Heart left ventricle (tissue), 16 donors: ENCODE measurements at regions of chr10 and their contacts with region 1.

Region 1: DNA sequence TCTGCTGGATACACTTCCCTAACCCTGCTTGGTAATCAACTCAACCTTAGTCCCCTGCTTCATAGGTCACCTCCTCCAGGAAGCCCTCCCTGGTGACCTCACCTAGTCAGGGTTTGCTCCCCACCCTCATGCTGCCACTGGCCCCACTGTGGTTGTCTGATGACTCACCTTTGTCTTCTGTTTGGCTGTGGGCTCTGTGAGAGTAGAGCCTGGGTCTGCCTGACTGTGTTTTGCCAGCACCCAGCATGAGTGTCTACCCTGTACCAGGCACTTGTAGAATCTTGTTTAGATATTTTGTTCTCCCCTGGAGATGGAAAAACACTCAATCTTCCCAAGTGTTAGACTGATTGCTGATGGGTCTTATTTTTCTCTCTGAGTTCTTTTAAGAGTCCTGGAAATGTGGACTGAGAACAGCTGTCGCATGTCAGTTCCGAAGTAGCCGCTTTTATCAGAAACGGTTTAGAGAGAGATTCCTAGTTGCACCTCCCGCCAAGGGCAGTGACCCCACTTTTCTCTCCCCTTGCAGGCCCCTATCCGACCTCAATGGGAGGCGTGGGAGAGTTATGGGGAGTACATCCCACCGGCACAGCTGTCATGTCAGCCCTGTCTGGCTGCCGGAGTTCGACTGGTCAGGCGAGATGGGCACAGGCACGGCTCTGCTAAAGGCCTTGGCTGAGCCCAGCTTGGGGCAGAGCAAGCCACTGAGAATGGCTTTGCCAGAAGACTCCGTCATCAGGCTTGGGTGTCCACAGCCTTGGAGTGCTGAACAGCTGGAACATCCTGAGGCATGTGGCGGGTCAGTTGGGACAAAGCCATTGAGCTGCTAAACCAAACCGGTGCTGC is 134.3 kb downstream of the GRK5 start:
- DNase-seq: peak; percentile 77 to 92 (median 83)
- ATAC-seq: peak; percentile 80 to 85 (median 82)
- H3K4me3 ChIP-seq: no peak overlapping the region
- H3K27ac ChIP-seq: peak overlapping the region; percentile 54 to 87 (median 78)
- H3K4me1 ChIP-seq: peaks cover 3 to 76% (median 42%) of the 10 kb centered on the region in 12 donors
- H3K27me3 ChIP-seq: no peaks in the 10 kb centered on the region
- CTCF ChIP-seq: no peak
- POLR2A ChIP-seq: no peak

Region 2: DNA sequence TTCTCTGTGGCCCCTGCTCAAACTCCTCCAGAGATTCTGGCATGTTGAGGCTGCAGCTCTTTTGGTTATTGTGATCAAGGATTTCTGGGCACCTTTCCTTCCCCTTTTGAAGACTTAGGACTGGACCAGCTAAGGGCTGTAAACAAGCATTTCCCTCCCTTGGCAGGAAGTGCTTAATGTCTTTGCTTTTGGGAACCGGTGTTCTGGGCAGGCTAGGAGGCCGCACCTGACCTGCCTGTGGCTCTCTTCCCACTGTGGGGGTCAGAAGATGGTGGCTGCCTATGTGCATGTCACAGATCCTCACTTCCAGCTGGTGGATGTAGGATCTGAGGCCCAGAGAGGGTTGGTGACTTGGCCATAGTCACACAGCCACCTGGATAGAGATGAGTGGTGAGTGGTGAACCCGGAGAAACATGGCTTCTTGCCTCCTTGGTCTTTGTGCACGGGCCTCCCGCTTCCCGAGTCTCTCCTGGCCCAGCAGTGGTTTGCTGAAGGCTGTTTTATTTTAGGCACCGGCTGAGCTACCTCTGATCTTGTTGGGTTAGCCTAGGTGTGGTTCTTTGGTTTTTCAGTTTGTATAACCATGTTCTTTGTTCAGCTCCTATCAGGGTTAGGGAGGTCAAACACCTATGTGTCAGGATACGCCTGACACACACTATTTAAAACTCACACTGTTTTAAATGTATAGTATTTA is 52.3 kb before region 1 on chr10:
- intact Hi-C with region 1: loop called in 1 of 10 experiments (anchors 5 kb)
- DNase-seq: peak in 2 of 5 donors; percentile 30 to 54
- ATAC-seq: peak in 1 of 4 donors; percentile 38
- H3K4me3 ChIP-seq: no peak overlapping the region
- H3K27ac ChIP-seq: peak overlapping the region; percentile 35 to 82 (median 58)
- H3K4me1 ChIP-seq: peaks cover 29 to 90% (median 67%) of the 10 kb centered on the region in 12 donors
- H3K27me3 ChIP-seq: no peaks in the 10 kb centered on the region
- CTCF ChIP-seq: no peak
- POLR2A ChIP-seq: no peak

Region 3: GRCh38 chr10:119299531-119299930 is 42.1 kb before region 1 on chr10:
- intact Hi-C with region 1: loop called in 1 of 10 experiments (anchors 5 kb)
- DNase-seq: peak in 2 of 5 donors; percentile 27 to 50
- ATAC-seq: peak in 2 of 4 donors; percentile 12 to 24
- H3K4me3 ChIP-seq: no peak overlapping the region
- H3K27ac ChIP-seq: no peak overlapping the region
- H3K4me1 ChIP-seq: peaks cover 0 to 86% (median 50%) of the 10 kb centered on the region in 12 donors
- H3K27me3 ChIP-seq: no peaks in the 10 kb centered on the region
- CTCF ChIP-seq: peak in 2 of 12 donors; percentile 11 to 26
- POLR2A ChIP-seq: no peak

Region 4: GRCh38 chr10:119395280-119395989 is 53.8 kb after region 1 on chr10:
- intact Hi-C with region 1: loop called in 1 of 10 experiments (anchors 5 kb)
- DNase-seq: peak; percentile 61 to 78 (median 72)
- ATAC-seq: peak; percentile 26 to 79 (median 63)
- H3K4me3 ChIP-seq: no peak overlapping the region
- H3K27ac ChIP-seq: peak overlapping the region; percentile 33 to 90 (median 62)
- H3K4me1 ChIP-seq: peaks cover 8 to 61% (median 42%) of the 10 kb centered on the region in 12 donors
- H3K27me3 ChIP-seq: no peaks in the 10 kb centered on the region
- CTCF ChIP-seq: no peak
- POLR2A ChIP-seq: no peak

Region 5: GRCh38 chr10:119596537-119597404 is 255.1 kb after region 1 on chr10 and contains the start of gene TIAL1:
- intact Hi-C with region 1: loop called in 1 of 10 experiments (anchors 5 kb)
- DNase-seq: peak; percentile 97 to 99 (median 98)
- ATAC-seq: peak; percentile 94 to 97 (median 96)
- H3K4me3 ChIP-seq: peak within 1 kb of the TSS; percentile 66 to 91 (median 88)
- H3K27ac ChIP-seq: peak within 1 kb of the TSS; percentile 94 to 100 (median 99)
- H3K4me1 ChIP-seq: peaks cover 0 to 49% (median 43%) of the 10 kb centered on the region in 12 donors
- H3K27me3 ChIP-seq: no peaks in the 10 kb centered on the region
- CTCF ChIP-seq: no peak
- POLR2A ChIP-seq: peak; percentile 40 to 79
- total RNA-seq, gene TIAL1: 36.9 to 86.3 (median 67.3) TPM